RWPE1 (cell line): ENCODE measurements at regions of chr10 and their contacts with region 1.

Region 1: DNA sequence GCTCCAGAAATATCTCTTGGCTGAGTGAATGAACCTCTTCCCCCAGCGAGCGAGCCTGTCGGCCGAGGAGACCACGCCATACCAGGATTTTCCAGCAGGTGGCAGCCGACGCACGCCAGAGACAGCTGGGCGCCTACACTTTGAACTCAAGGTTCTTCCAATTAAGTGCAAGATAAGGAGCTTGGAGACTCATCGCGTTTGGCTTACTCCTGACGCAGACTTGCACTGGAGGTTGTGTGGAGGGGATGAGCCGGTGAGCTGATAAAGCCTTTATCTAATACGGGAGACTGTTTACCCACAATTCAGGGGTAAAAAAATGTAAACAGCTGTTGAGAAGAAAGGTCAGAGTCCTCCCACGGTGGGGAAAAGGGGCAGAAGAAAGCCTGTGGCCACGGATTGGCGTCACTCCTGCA is 45.9 kb upstream of the EMX2 start:
- DNase-seq: peak; percentile 81
- H3K27ac ChIP-seq: no peak overlapping the region
- CTCF ChIP-seq: peak; percentile 94

Region 2: GRCh38 chr10:117320050-117320665 is 176.5 kb before region 1 on chr10:
- CTCF ChIA-PET with region 1: no interaction called
- POLR2A ChIA-PET with region 1: no interaction called
- DNase-seq: peak; percentile 43
- H3K27ac ChIP-seq: no peak overlapping the region
- CTCF ChIP-seq: peak; percentile 70

Region 3: DNA sequence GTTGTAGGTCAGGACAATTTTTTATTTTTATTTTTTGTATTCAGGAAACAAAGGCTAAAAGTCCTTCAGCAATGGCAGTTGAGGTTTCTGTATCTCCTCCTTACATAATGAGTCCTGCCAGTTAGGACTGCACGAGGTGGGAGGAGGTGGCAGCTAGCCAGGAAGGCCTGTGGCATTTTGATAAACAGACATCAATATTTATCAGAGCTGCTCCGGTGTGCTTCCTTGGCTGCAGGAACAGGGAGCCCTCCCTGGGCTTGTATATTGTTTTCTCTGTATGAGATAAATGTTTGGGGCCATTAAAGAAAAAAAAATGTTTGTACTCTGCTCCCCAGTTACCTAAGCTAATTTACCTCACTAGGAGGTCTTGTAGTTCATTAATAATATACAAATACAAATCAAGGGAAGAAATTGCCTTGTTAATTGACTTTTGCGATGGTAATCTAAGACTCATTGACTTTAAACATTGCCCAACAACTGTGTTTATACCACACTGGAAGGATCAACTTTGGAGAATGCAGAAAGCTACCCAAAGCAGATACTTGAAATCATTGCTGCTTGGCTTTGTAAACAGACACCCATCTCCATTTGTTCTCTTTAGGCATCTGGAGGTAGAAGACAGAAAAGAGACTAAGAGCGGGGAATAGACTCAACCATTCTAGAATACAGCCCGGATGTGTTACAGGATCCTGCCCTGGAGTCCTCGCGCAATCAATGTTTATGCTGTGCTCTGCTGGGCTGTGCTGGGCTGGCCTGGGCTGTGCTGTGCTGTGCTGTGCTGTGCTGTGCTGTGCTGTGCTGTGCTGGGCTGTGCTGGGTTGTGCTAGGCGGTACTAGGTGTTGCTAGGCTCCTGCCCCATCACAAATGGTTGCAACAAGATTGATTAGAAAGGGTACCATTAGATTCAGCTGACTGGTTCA is 84.9 kb before region 1 on chr10:
- CTCF ChIA-PET with region 1: no interaction called
- POLR2A ChIA-PET with region 1: no interaction called
- DNase-seq: no peak
- H3K27ac ChIP-seq: no peak overlapping the region
- CTCF ChIP-seq: no peak

Region 4: GRCh38 chr10:118241229-118242137 is 744.9 kb after region 1 on chr10:
- CTCF ChIA-PET with region 1: interaction called, 21 read pairs
- POLR2A ChIA-PET with region 1: no interaction called
- DNase-seq: peak; percentile 69
- H3K27ac ChIP-seq: no peak overlapping the region
- CTCF ChIP-seq: peak; percentile 88